HepG2 (cell line): ENCODE measurements at regions of chr5 and their contacts with region 1.

Region 1: DNA sequence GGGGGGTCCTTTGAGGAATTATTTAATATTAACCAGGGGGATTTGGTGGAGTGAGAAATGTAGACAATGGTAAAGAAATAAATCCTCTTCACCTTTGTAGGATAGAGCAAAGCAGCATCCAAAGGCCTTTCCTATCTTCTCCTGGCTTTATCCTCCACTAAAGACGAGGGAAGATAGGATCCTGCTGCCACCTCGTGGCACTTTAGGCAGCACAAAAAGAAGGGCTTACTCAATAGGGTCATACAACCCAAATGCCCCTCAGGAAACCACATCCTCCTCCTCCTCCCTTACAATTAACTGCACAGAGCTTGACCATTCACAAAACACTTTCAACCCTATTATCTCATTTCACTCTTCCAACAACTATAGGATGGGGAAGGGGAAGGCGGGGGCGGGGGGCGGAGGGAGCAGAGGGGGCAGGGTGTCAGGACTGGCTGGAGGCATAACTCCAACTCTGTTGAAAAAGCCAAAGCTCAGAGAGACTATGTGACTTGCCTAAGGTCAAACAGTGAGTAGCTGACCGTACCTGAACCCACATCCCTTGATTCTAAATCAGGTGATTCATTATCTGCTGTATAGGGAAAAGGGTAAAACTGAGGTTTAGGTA is 45.4 kb upstream of the MYOT start:
- DNase-seq: peak; percentile 53
- ATAC-seq: peak; percentile 89
- H3K4me3 ChIP-seq: no peak overlapping the region
- H3K27ac ChIP-seq: no peak overlapping the region
- H3K4me1 ChIP-seq: no peaks in the 10 kb centered on the region
- H3K27me3 ChIP-seq: no peaks in the 10 kb centered on the region; a peak in 2 of 5 replicates
- CTCF ChIP-seq: peak; percentile 81
- EP300 ChIP-seq: no peak
- POLR2A ChIP-seq: no peak
- RAD21 ChIP-seq: peak; percentile 61

Region 2: GRCh38 chr5:137629646-137630045 is 192.6 kb before region 1 on chr5:
- CTCF ChIA-PET with region 1: interaction called, 7 read pairs
- POLR2A ChIA-PET with region 1: no interaction called
- in situ Hi-C with region 1: loop called (anchors 5 kb)
- intact Hi-C with region 1: loop called (anchors 1 kb)
- DNase-seq: peak; percentile 41
- ATAC-seq: peak; percentile 94
- H3K4me3 ChIP-seq: no peak overlapping the region
- H3K27ac ChIP-seq: no peak overlapping the region
- H3K4me1 ChIP-seq: no peaks in the 10 kb centered on the region
- H3K27me3 ChIP-seq: no peaks in the 10 kb centered on the region
- CTCF ChIP-seq: peak; percentile 82
- EP300 ChIP-seq: no peak
- POLR2A ChIP-seq: no peak
- RAD21 ChIP-seq: peak; percentile 82

Region 3: DNA sequence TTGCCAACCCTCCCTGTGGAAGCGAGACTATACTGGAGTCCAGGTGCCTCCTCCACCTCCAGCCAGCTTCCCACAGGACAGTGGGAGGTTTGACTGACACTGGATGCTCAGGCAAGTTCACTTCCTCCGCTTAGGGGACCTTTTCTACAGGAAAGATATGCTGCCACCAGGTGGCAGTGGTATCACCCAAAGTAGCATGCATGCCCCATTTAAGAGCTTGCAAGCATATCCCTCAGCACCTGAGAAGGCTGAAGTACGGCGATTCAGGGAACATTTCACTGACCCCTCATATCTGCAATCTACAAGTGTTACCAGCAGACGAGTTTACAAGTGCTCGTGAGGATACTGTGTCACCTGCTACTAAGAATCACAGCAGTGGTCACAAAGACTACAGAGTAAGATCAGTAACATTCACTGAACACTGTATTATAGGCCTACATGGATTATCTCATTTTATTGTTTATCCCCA is 161.9 kb before region 1 on chr5:
- CTCF ChIA-PET with region 1: interaction called, 9 read pairs
- POLR2A ChIA-PET with region 1: no interaction called
- in situ Hi-C with region 1: no loop called
- intact Hi-C with region 1: loop called (anchors 1 kb)
- DNase-seq: peak; percentile 63
- ATAC-seq: peak; percentile 95
- H3K4me3 ChIP-seq: no peak overlapping the region
- H3K27ac ChIP-seq: no peak overlapping the region
- H3K4me1 ChIP-seq: no peaks in the 10 kb centered on the region
- H3K27me3 ChIP-seq: no peaks in the 10 kb centered on the region
- CTCF ChIP-seq: peak; percentile 89
- EP300 ChIP-seq: no peak
- POLR2A ChIP-seq: no peak
- RAD21 ChIP-seq: peak; percentile 66

Region 4: DNA sequence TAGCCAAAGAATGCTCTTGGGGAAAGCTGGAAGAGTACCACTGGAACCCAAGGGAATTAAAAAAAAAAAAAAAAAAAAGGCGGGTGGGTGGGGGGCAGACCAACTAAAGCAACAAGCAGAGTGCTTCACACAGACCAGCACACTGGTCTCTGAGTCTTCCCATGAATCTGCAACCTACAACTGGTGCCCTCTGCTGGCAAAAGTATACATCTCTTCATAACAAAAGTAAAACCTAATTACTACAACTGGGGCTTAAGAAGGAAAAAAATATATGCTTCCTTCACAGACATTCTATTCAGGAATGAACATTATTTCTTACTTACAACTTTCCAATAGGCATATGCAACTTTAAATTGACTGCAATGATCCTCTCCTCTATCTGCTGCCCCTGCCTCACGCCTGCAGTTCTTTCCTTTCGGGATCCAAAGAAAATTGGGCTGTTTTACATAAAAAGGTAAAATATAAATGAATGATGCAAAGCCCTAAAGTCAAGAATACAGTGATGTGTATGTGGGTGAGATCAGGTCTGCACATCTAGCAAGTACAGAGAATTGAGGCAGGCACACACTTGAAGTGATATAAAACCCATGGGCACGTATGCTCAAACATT is 79.1 kb before region 1 on chr5:
- CTCF ChIA-PET with region 1: no interaction called
- POLR2A ChIA-PET with region 1: no interaction called
- in situ Hi-C with region 1: no loop called
- intact Hi-C with region 1: loop called (anchors 2 kb)
- DNase-seq: peak; percentile 77
- ATAC-seq: peak; percentile 84
- H3K4me3 ChIP-seq: no peak overlapping the region
- H3K27ac ChIP-seq: no peak overlapping the region
- H3K4me1 ChIP-seq: peaks cover 19% of the 10 kb centered on the region
- H3K27me3 ChIP-seq: no peaks in the 10 kb centered on the region
- CTCF ChIP-seq: peak; percentile 69
- EP300 ChIP-seq: no peak
- POLR2A ChIP-seq: no peak
- RAD21 ChIP-seq: 0 out of 2 replicates have a peak, but pooled peaks have one; percentile 17

Region 5: DNA sequence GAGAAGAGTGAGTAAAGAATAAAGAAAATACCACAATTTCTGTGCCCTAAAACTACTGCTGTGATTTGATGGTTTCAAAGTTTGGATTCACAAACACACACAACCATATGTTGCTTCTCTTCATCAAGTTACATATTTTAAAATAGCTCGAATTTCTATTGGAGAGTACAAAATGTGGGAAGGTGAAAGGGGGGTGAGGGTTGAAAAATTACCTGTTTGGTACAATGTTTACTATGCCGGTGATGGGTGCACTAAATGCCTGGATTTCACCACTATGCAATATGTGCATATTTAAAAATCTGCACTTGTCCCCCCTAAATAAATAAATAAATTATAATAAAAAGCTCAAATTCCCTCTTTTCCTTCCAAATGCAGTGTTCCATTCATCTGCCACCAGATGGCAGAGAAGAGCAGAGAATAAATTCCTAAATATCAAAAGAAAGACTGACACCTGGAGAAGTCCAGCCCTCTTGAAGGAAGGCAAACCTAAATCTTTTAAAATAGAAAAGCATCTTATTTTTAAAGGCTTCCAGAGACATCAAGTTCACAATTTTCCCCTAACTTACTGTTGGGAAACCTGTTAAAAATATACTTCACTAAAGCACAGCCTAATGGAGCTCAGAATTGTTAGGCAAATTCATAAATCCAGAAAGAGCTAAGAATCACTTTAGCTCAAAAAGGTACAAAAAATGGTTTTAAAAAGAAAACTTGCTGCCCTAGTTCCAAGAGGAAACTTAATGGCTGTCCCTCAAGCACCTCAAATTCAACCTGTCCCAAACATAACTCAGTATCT is 43.3 kb before region 1 on chr5:
- CTCF ChIA-PET with region 1: interaction called, 35 read pairs
- POLR2A ChIA-PET with region 1: no interaction called
- in situ Hi-C with region 1: loop called (anchors 5 kb)
- intact Hi-C with region 1: loop called (anchors 1 kb)
- DNase-seq: peak; percentile 27
- ATAC-seq: no peak
- H3K4me3 ChIP-seq: no peak overlapping the region
- H3K27ac ChIP-seq: no peak overlapping the region
- H3K4me1 ChIP-seq: peaks cover 14% of the 10 kb centered on the region
- H3K27me3 ChIP-seq: peaks cover 0 to 4% of the 10 kb centered on the region in 2 experiments; a peak in 1 of 5 replicates
- CTCF ChIP-seq: peak; percentile 58
- EP300 ChIP-seq: no peak
- POLR2A ChIP-seq: no peak
- RAD21 ChIP-seq: no peak